ENCODE measurements at regions of chr5 and their contacts with region 1.

Region 1: DNA sequence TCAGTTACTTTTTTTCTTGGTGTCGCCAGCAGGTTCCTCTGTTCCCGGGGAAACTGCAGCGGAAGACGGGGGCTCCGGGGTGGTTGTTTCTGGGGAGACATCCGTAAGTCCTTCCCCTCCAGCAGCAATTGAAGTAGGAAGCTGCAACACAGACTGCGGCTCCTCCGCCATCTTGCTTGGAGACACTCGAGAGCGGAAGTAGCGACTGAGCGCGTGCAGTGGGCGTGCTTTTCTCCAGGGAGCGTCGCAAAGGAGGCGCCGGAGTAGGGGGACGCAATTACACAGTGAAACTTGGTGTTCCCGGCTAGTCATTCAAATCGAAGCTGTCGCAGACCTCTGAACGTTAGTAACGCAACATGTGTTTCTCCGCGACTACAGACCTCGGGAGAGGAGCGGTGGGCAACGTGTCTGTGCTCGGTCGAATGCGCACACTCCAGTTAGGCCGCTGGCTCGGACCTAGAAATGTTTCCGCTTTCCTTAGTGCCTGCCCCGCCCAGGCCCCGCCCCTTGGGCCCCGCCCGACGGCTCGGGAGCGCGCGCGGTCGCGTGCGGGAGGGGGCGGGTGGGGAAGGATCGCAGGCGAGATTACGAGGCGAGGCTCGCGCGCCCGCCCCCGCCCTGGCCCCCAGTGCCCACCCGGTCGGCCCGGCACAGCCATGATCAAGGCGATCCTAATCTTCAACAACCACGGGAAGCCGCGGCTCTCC is at the starts of genes AP3S1 and ATG12:
- DNase-seq: peak; percentile 92 to 95 (median 94)
- H3K4me3 ChIP-seq: peak within 1 kb of the TSS; percentile 79 to 91
- H3K4me3 Mint-ChIP-seq: peak within 1 kb of the TSS; percentile 97 to 99 (median 99)
- H3K27ac ChIP-seq: peak within 1 kb of the TSS; percentile 93
- H3K27ac Mint-ChIP-seq: peak within 1 kb of the TSS; percentile 99 to 100 (median 100)
- H3K4me1 ChIP-seq: peaks cover 55% of the 10 kb centered on the region
- H3K4me1 Mint-ChIP-seq: peaks cover 33 to 74% (median 52%) of the 10 kb centered on the region in 4 donors
- H3K27me3 ChIP-seq: no peaks in the 10 kb centered on the region
- H3K27me3 Mint-ChIP-seq: no peaks in the 10 kb centered on the region
- total RNA-seq, gene AP3S1: 44.5 to 46.3 TPM
- total RNA-seq, gene ATG12: 84.7 to 85.9 TPM

Region 2: GRCh38 chr5:115169487-115170133 is 671.9 kb before region 1 on chr5 and contains the start of gene TRIM36:
- CTCF ChIA-PET with region 1: no interaction called
- POLR2A ChIA-PET with region 1: no interaction called
- intact Hi-C with region 1: loop called (anchors 5 kb)
- DNase-seq: peak; percentile 83 to 87 (median 86)
- H3K4me3 ChIP-seq: peak within 1 kb of the TSS; percentile 17 to 67
- H3K4me3 Mint-ChIP-seq: peak within 1 kb of the TSS; percentile 79 to 84 (median 81)
- H3K27ac ChIP-seq: no peak within 1 kb of the TSS
- H3K27ac Mint-ChIP-seq: peak within 1 kb of the TSS in 3 of 7 donors; percentile 25 to 64 (median 41)
- H3K4me1 ChIP-seq: peaks cover 21% of the 10 kb centered on the region
- H3K4me1 Mint-ChIP-seq: peaks cover 2 to 13% (median 11%) of the 10 kb centered on the region in 4 donors
- H3K27me3 ChIP-seq: peaks cover 43% of the 10 kb centered on the region
- H3K27me3 Mint-ChIP-seq: peaks cover 38 to 48% of the 10 kb centered on the region in 2 donors
- total RNA-seq, gene TRIM36: not detected

Region 3: GRCh38 chr5:115296124-115297022 is 545.2 kb before region 1 on chr5 and contains the start of gene CCDC112:
- CTCF ChIA-PET with region 1: no interaction called
- POLR2A ChIA-PET with region 1: interaction called, 4 read pairs
- intact Hi-C with region 1: loop called (anchors 1 kb)
- DNase-seq: peak; percentile 61 to 72 (median 64)
- H3K4me3 ChIP-seq: peak within 1 kb of the TSS; percentile 5 to 44
- H3K4me3 Mint-ChIP-seq: peak within 1 kb of the TSS; percentile 83 to 91 (median 89)
- H3K27ac ChIP-seq: no peak within 1 kb of the TSS
- H3K27ac Mint-ChIP-seq: peak within 1 kb of the TSS in 6 of 7 donors; percentile 44 to 83 (median 55)
- H3K4me1 ChIP-seq: peaks cover 13% of the 10 kb centered on the region
- H3K4me1 Mint-ChIP-seq: peaks cover 6 to 17% (median 15%) of the 10 kb centered on the region in 4 donors
- H3K27me3 ChIP-seq: no peaks in the 10 kb centered on the region
- H3K27me3 Mint-ChIP-seq: peaks cover 1 to 2% of the 10 kb centered on the region in 2 donors
- total RNA-seq, gene CCDC112: 5.9 to 6.3 TPM

Region 4: GRCh38 chr5:115544436-115545350 is 296.8 kb before region 1 on chr5 and contains the start of gene FEM1C:
- CTCF ChIA-PET with region 1: interaction called, 3 read pairs
- POLR2A ChIA-PET with region 1: interaction called, 29 read pairs
- intact Hi-C with region 1: loop called (anchors 1 kb)
- DNase-seq: peak; percentile 91 to 95 (median 92)
- H3K4me3 ChIP-seq: peak within 1 kb of the TSS; percentile 64 to 71
- H3K4me3 Mint-ChIP-seq: peak within 1 kb of the TSS; percentile 93 to 100 (median 95)
- H3K27ac ChIP-seq: peak within 1 kb of the TSS; percentile 97
- H3K27ac Mint-ChIP-seq: peak within 1 kb of the TSS; percentile 97 to 99 (median 98)
- H3K4me1 ChIP-seq: peaks cover 44% of the 10 kb centered on the region
- H3K4me1 Mint-ChIP-seq: peaks cover 30 to 53% (median 38%) of the 10 kb centered on the region in 4 donors
- H3K27me3 ChIP-seq: no peaks in the 10 kb centered on the region
- H3K27me3 Mint-ChIP-seq: no peaks in the 10 kb centered on the region
- total RNA-seq, gene FEM1C: 17.4 to 19.7 TPM

Region 5: GRCh38 chr5:115634343-115635132 is 207.0 kb before region 1 on chr5:
- CTCF ChIA-PET with region 1: interaction called, 14 read pairs
- POLR2A ChIA-PET with region 1: interaction called, 4 read pairs
- intact Hi-C with region 1: loop called (anchors 1 kb)
- DNase-seq: peak; percentile 72 to 78 (median 75)
- H3K4me3 ChIP-seq: peak overlapping the region in 1 of 2 donors; percentile 10
- H3K4me3 Mint-ChIP-seq: peak overlapping the region; percentile 45 to 87 (median 72)
- H3K27ac ChIP-seq: peak overlapping the region; percentile 26
- H3K27ac Mint-ChIP-seq: peak overlapping the region in 6 of 7 donors; percentile 42 to 85 (median 60)
- H3K4me1 ChIP-seq: peaks cover 7% of the 10 kb centered on the region
- H3K4me1 Mint-ChIP-seq: peaks cover 6 to 7% (median 6%) of the 10 kb centered on the region in 4 donors
- H3K27me3 ChIP-seq: no peaks in the 10 kb centered on the region
- H3K27me3 Mint-ChIP-seq: peaks cover 0 to 2% of the 10 kb centered on the region in 2 donors

Region 6: DNA sequence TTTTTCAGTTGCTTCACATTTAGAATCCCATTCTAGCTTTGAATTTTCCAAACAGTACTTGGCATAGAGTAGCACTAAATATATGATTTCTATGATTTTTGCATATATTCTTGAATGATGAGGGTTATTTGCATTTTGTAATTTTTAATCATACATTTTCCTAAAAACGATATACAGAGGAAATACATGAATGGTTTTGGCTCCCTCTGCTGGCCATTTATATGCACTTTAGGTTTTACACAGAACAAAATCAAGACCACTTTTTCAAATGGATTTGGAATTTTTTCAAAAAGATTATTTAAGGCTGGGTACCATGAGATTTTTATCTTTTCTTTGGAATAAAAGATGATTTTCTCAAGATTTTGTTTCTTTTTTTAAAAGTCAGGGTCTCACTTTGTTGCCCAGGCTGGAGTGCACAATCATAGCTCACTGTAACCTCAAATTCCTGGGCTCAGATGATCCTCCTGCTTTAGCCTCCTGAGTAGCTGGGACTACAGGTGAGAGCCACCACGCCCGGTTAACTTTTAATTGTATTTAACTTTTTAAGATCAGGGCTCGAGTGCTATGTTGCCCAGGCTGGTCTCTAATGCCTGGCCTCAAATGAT is 226.6 kb after region 1 on chr5:
- CTCF ChIA-PET with region 1: interaction called, 4 read pairs
- POLR2A ChIA-PET with region 1: no interaction called
- intact Hi-C with region 1: loop called (anchors 5 kb)
- DNase-seq: peak in 4 of 5 donors; percentile 32 to 46 (median 34)
- H3K4me3 ChIP-seq: no peak overlapping the region
- H3K4me3 Mint-ChIP-seq: no peak overlapping the region
- H3K27ac ChIP-seq: no peak overlapping the region
- H3K27ac Mint-ChIP-seq: no peak overlapping the region
- H3K4me1 ChIP-seq: no peaks in the 10 kb centered on the region
- H3K4me1 Mint-ChIP-seq: no peaks in the 10 kb centered on the region
- H3K27me3 ChIP-seq: peaks cover 13% of the 10 kb centered on the region
- H3K27me3 Mint-ChIP-seq: peaks cover 16 to 22% of the 10 kb centered on the region in 2 donors

Measured in CD4-positive, alpha-beta memory T cell (primary cell).